ENCODE measurements at regions of chr1 and their contacts with region 1.

Region 1: GRCh38 chr1:6259491-6260425 is 1.1 kb downstream of the GPR153 start:
- DNase-seq: peak; percentile 91
- ATAC-seq: peak; percentile 80 to 83
- H3K4me3 ChIP-seq: peak overlapping the region; percentile 70
- H3K27ac ChIP-seq: peak overlapping the region; percentile 64
- H3K4me1 ChIP-seq: peaks cover 33% of the 10 kb centered on the region
- H3K27me3 ChIP-seq: peaks cover 24% of the 10 kb centered on the region
- CTCF ChIP-seq: no peak

Region 2: GRCh38 chr1:6343506-6344405 is 84.0 kb after region 1 on chr1:
- intact Hi-C with region 1: loop called (anchors 10 kb)
- DNase-seq: peak; percentile 75
- ATAC-seq: peak; percentile 81 to 89
- H3K4me3 ChIP-seq: no peak overlapping the region
- H3K27ac ChIP-seq: no peak overlapping the region
- H3K4me1 ChIP-seq: peaks cover 10% of the 10 kb centered on the region
- H3K27me3 ChIP-seq: no peaks in the 10 kb centered on the region
- CTCF ChIP-seq: peak; percentile 86

Measured in lower lobe of right lung (tissue), 2 donors.